Activated T-helper 1 cell treated with anti-CD3 and anti-CD28 coated beads, Interleukin-12 subunit alpha, Interleukin-12 subunit beta, Interleukin-2, Interleukin-4 antibody, amounts not matched to agents 30 ng/mL and 10 ng/mL and 1 ng/mL, durations not matched to agents 14 hours and 24 hours and 36 hours (primary cell): ENCODE measurements at regions of chr2 and their contacts with region 1.

Region 1: GRCh38 chr2:157443795-157444640 is at the start of gene CYTIP:
- DNase-seq: peak; percentile 73
- H3K4me3 Mint-ChIP-seq: peak within 1 kb of the TSS; percentile 98
- H3K27ac Mint-ChIP-seq: peak within 1 kb of the TSS; percentile 99
- H3K4me1 Mint-ChIP-seq: peaks cover 58% of the 10 kb centered on the region
- H3K27me3 Mint-ChIP-seq: no peaks in the 10 kb centered on the region
- total RNA-seq, gene CYTIP: 296 and 302 TPM in 2 replicates

Region 2: DNA sequence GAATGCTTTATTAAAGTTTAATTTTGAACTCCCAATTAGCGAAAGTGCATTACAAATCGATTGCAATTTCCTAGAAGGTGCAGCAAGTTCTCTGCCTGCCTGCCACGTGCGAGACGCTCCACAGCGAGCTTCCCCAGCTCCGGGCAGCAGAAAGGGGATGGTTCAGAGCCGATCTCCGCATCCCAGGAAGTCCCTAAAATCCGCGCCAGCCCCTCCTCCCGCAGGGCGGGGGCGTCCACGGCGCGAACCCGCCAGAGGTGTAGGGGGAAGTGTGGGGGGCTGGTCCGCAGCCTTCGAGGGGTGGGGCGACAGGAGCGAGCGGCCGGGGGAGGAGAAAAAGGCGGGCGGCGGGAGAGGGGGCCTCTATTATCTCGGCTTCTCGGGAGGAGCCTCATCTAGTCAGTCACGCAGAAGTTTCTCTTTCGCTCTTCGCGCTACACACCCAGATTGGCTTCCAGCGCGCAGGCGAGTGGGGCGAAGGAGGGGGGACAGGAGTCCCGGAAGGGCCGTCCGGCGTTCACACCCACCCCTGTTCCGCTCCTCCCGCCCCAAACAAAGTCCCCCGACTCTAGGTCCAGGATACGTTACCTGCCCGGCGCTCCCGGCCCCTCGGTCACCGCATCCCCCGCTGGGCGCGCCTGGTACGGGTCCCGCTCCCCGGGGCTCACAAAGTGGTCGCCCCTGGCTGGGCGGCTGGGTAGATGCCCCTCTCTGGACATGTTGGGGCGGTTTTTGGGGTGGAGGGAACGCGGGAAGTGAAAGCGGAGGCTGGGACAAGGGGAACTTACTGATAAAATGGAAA is 1102.4 kb before region 1 on chr2:
- intact Hi-C with region 1: loop called (anchors 5 kb)
- DNase-seq: peak; percentile 85
- H3K4me3 Mint-ChIP-seq: peak overlapping the region; percentile 96
- H3K27ac Mint-ChIP-seq: peak overlapping the region; percentile 99
- H3K4me1 Mint-ChIP-seq: peaks cover 57% of the 10 kb centered on the region
- H3K27me3 Mint-ChIP-seq: no peaks in the 10 kb centered on the region

Region 3: GRCh38 chr2:157327621-157328500 is 116.2 kb before region 1 on chr2:
- intact Hi-C with region 1: loop called (anchors 1 kb)
- DNase-seq: peak; percentile 74
- H3K4me3 Mint-ChIP-seq: peak overlapping the region; percentile 32
- H3K27ac Mint-ChIP-seq: peak overlapping the region; percentile 26
- H3K4me1 Mint-ChIP-seq: peaks cover 38% of the 10 kb centered on the region
- H3K27me3 Mint-ChIP-seq: no peaks in the 10 kb centered on the region

Region 4: DNA sequence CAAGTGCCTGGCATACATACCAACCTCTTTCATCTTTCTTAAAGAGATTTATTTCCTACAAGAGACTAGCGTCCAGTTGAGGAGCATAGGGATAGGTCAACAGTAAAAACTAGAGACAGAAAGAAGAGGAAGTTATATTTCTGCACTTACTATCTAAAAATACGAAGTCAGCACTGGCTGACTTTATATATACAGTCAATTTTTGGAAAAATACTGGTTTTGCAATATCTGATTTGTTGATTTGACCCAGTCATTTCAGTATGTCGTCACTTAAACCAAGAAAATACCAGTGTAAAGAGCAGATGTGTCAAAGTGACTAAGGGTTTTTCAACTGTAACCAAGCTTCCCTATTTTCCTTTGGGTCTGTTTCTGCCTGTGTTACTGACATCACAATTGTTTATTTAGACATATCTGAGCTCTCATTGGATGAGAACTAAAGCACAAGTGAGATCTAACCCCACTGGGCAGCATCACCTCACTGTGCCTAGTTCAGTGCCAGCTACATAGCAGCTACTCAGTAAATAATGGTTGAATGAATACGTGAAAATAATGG is 23.2 kb before region 1 on chr2:
- intact Hi-C with region 1: loop called (anchors 2 kb)
- DNase-seq: no peak
- H3K4me3 Mint-ChIP-seq: peak overlapping the region; percentile 69
- H3K27ac Mint-ChIP-seq: peak overlapping the region; percentile 91
- H3K4me1 Mint-ChIP-seq: peaks cover 84% of the 10 kb centered on the region
- H3K27me3 Mint-ChIP-seq: no peaks in the 10 kb centered on the region

Region 5: DNA sequence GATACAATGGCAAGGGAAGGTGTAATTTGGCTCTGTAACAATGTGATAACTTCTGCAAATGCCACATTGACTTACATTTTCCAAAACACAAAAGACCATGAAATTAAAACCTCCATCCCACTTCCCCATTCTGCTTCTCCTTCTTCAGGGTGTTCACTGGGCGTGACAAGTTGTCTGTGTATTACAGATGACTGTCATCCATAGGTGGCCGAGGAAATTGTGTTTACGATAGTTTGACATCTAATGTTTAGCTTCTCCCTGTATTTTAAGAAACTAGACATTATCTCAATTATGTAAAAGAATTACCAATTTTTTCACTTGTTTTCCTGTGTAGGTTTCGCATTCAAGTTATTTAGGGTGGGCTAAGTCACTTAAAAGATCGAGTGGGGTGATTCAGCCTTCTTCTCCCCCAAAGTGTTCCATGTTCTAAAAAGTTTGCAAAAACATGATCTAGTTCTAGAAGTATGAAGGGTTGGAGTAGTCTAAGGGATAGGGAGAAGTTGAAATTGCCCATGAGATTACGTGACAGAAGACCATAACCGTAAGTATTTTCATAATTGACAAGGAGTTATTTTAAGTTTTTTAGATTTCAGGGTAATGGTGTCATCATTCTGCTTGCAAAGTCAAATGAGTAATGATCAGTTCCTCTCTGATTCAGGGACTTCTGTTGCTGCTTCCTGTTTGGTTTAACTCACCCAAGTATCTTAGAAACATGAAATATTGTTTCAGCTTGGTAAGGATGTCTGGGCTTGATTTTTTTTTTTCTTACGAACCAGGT is 25.1 kb after region 1 on chr2:
- intact Hi-C with region 1: loop called (anchors 1 kb)
- DNase-seq: no peak
- H3K4me3 Mint-ChIP-seq: peak overlapping the region; percentile 71
- H3K27ac Mint-ChIP-seq: peak overlapping the region; percentile 97
- H3K4me1 Mint-ChIP-seq: peaks cover 90% of the 10 kb centered on the region
- H3K27me3 Mint-ChIP-seq: no peaks in the 10 kb centered on the region

Region 6: GRCh38 chr2:157486596-157487270 is 42.7 kb after region 1 on chr2:
- intact Hi-C with region 1: no loop called
- DNase-seq: no peak
- H3K4me3 Mint-ChIP-seq: peak overlapping the region; percentile 74
- H3K27ac Mint-ChIP-seq: peak overlapping the region; percentile 83
- H3K4me1 Mint-ChIP-seq: peaks cover 94% of the 10 kb centered on the region
- H3K27me3 Mint-ChIP-seq: no peaks in the 10 kb centered on the region

Region 7: DNA sequence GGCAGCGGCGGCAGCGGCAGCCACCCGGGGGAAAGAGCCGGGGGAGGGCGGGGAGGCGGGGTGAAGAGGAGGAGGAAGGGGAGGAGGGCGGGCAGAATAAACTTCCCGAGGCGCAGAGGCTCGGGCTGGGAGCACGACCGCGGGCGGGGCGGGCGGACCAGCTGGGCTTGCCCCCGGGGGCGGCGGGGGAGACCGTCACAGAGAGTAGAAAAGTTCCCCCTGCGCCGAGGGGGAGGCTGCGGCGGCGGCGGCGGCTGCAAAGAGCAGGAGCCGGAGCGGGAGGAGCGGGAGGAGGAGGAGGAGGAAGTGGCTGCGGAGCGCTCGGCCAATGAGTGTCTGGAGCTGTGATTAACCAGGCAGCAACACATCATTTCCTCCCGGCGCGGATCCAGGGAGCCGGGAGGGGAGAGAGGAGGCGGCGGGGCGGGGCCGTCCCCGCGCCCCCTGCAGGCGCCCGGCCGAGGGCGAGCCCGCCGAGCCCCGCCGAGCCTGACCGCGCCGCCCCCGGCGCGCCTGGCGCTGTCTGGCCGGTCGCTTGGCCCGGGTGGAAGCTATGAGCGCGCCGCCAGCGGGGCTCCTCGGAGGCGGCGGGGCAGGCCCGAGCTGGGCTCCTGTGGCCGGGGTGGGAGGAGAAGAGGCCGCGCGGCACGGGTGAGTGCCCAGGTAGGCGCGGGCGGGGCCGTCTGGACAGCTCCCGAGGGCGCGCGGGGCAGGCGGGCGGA is 432.2 kb after region 1 on chr2 and contains the start of gene ACVR1:
- intact Hi-C with region 1: loop called (anchors 5 kb)
- DNase-seq: peak; percentile 80
- H3K4me3 Mint-ChIP-seq: peak within 1 kb of the TSS; percentile 98
- H3K27ac Mint-ChIP-seq: peak within 1 kb of the TSS; percentile 96
- H3K4me1 Mint-ChIP-seq: peaks cover 65% of the 10 kb centered on the region
- H3K27me3 Mint-ChIP-seq: no peaks in the 10 kb centered on the region
- total RNA-seq, gene ACVR1: 44.0 and 46.5 TPM in 2 replicates

Region 8: GRCh38 chr2:158034199-158034866 is 590.3 kb after region 1 on chr2:
- intact Hi-C with region 1: no loop called
- DNase-seq: no peak
- H3K4me3 Mint-ChIP-seq: no peak overlapping the region
- H3K27ac Mint-ChIP-seq: no peak overlapping the region
- H3K4me1 Mint-ChIP-seq: no peaks in the 10 kb centered on the region
- H3K27me3 Mint-ChIP-seq: peaks cover 17% of the 10 kb centered on the region